Right cardiac atrium (tissue), 5 donors: ENCODE measurements at regions of chr11 and their contacts with region 1.

Region 1: DNA sequence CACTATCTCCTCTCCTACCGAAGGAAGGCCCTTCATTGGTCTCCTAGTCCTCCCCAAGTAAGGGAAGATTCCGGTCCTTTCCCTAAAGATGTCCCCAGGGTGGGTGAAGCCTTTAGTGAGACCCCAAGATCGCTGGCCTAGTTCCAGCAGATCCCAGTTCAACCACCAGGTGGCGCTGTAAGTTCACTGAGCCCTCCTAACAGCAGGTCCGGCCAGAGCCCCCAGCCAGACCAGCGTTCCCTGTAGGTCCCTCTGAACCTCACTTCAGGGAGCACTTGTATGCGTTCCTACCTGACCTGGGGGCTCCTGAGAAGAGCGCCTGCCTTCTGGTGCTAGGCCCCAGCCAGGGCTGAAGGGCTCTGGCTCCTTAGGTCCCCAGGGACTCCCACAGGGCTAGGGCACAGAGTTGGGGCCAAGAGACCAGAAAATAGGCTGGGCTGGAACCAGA is 38.1 kb downstream of the LMO1 start:
- DNase-seq: peak; percentile 67 to 89 (median 87)
- ATAC-seq: peak; percentile 59 to 61
- H3K4me3 ChIP-seq: no peak overlapping the region
- H3K27ac ChIP-seq: no peak overlapping the region
- H3K4me1 ChIP-seq: no peaks in the 10 kb centered on the region
- H3K27me3 ChIP-seq: no peaks in the 10 kb centered on the region

Region 2: DNA sequence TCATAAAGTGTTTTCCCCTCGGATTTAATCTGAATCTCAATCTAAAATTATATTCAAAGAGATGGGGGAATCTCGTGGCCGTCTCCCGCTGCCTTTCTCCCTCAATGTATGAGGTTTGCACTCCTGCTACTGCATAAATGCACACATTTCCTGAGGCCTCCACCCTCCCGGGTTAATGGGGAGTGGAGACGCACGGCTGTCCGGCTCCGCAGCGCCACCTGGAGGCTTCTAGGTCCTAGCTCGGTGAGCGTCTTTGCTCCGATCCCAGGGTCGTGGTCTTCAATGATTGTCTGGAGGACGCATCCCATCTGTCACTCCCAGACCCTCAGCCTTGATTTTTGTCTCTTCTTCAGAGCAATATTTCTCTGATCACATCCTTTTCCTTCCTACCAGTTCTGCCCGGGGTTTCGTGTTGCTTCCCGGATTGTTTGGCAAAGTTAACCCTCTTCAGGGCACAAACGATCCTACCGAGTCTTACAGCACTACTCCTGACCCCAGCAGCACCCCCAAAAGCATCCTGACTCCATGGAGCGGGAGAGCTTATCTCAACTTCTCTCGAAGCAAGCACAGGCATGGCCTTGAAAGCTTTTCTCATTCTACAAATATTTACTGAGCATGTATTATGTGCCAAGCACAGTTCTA is 38.3 kb after region 1 on chr11 and contains the start of gene LMO1:
- intact Hi-C with region 1: loop called in 2 of 4 experiments (anchors 5 kb)
- DNase-seq: peak; percentile 84 to 92 (median 90)
- ATAC-seq: peak; percentile 71 to 84
- H3K4me3 ChIP-seq: peak within 1 kb of the TSS; percentile 66
- H3K27ac ChIP-seq: no peak within 1 kb of the TSS
- H3K4me1 ChIP-seq: no peaks in the 10 kb centered on the region
- H3K27me3 ChIP-seq: no peaks in the 10 kb centered on the region
- total RNA-seq, gene LMO1: 0.51 TPM in 1 of 4 donors, not detected in the others

Region 3: GRCh38 chr11:8318336-8318935 is 92.8 kb after region 1 on chr11:
- intact Hi-C with region 1: loop called in 1 of 4 experiments (anchors 5 kb)
- DNase-seq: no peak
- ATAC-seq: peak in 1 of 2 donors; percentile 27
- H3K4me3 ChIP-seq: no peak overlapping the region
- H3K27ac ChIP-seq: no peak overlapping the region
- H3K4me1 ChIP-seq: no peaks in the 10 kb centered on the region
- H3K27me3 ChIP-seq: no peaks in the 10 kb centered on the region